Heart right ventricle (tissue), 16 donors: ENCODE measurements at regions of chr12 and their contacts with region 1.

Region 1: GRCh38 chr12:83451189-83451588 is 764.5 kb downstream of the TMTC2 start:
- DNase-seq: no peak
- ATAC-seq: no peak
- H3K4me3 ChIP-seq: no peak overlapping the region
- H3K27ac ChIP-seq: no peak overlapping the region
- H3K4me1 ChIP-seq: no peaks in the 10 kb centered on the region
- H3K27me3 ChIP-seq: no peaks in the 10 kb centered on the region
- CTCF ChIP-seq: no peak

Region 2: GRCh38 chr12:83434600-83434999 is 16.6 kb before region 1 on chr12:
- intact Hi-C with region 1: no loop called
- DNase-seq: no peak
- ATAC-seq: no peak
- H3K4me3 ChIP-seq: no peak overlapping the region
- H3K27ac ChIP-seq: no peak overlapping the region
- H3K4me1 ChIP-seq: no peaks in the 10 kb centered on the region
- H3K27me3 ChIP-seq: no peaks in the 10 kb centered on the region
- CTCF ChIP-seq: peak in 1 of 9 donors; percentile 12

Region 3: DNA sequence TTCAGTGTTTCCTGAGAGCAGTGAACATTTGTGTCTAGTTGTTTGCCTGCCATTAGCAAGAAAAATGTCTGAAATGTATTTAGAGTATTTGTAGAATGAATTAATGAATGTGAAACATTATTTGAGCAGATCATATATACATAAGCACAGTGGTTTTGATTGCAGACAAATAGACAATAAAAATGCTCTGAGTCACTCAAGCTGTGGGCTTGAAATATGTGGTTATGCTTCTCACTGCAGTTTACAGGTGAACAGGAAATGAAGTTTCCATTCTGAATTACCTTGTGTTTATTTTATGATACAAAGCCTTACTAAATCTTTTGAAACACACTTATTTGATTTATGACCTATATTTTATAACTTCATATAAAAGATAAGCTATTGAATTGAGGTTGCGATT is 63.2 kb after region 1 on chr12:
- intact Hi-C with region 1: loop called in 1 of 10 experiments (anchors 2 kb)
- DNase-seq: no peak
- ATAC-seq: no peak
- H3K4me3 ChIP-seq: no peak overlapping the region
- H3K27ac ChIP-seq: no peak overlapping the region
- H3K4me1 ChIP-seq: no peaks in the 10 kb centered on the region
- H3K27me3 ChIP-seq: no peaks in the 10 kb centered on the region
- CTCF ChIP-seq: no peak